Endothelial cell of umbilical vein (primary cell): ENCODE measurements at regions of chr13 and their contacts with region 1.

Region 1: GRCh38 chr13:99200432-99201167 is at the start of gene UBAC2:
- DNase-seq: peak; percentile 96
- H3K4me3 ChIP-seq: peak within 1 kb of the TSS; percentile 75 to 95 (median 79)
- H3K27ac ChIP-seq: peak within 1 kb of the TSS; percentile 85
- H3K4me1 ChIP-seq: peaks cover 7% of the 10 kb centered on the region
- H3K27me3 ChIP-seq: no peaks in the 10 kb centered on the region
- CTCF ChIP-seq: no peak
- POLR2A ChIP-seq: peak; percentile 97
- total RNA-seq, gene UBAC2: 45.2 and 45.7 TPM in 2 replicates

Region 2: GRCh38 chr13:99087096-99087953 is 113.3 kb before region 1 on chr13:
- CTCF ChIA-PET with region 1: no interaction called
- POLR2A ChIA-PET with region 1: no interaction called
- dilution Hi-C with region 1: no loop called
- intact Hi-C with region 1: loop called (anchors 2 kb)
- DNase-seq: peak; percentile 88
- H3K4me3 ChIP-seq: peak overlapping the region; percentile 61 to 65 (median 63)
- H3K27ac ChIP-seq: peak overlapping the region; percentile 20
- H3K4me1 ChIP-seq: peaks cover 19% of the 10 kb centered on the region
- H3K27me3 ChIP-seq: no peaks in the 10 kb centered on the region
- CTCF ChIP-seq: peak in 1 of 2 donors; percentile 45
- POLR2A ChIP-seq: no peak

Region 3: GRCh38 chr13:99214232-99214631 is 13.6 kb after region 1 on chr13:
- CTCF ChIA-PET with region 1: interaction called, 12 read pairs
- POLR2A ChIA-PET with region 1: no interaction called
- dilution Hi-C with region 1: no loop called
- intact Hi-C with region 1: no loop called
- DNase-seq: no peak
- H3K4me3 ChIP-seq: no peak overlapping the region
- H3K27ac ChIP-seq: no peak overlapping the region
- H3K4me1 ChIP-seq: peaks cover 4% of the 10 kb centered on the region
- H3K27me3 ChIP-seq: no peaks in the 10 kb centered on the region
- CTCF ChIP-seq: no peak
- POLR2A ChIP-seq: no peak

Region 4: DNA sequence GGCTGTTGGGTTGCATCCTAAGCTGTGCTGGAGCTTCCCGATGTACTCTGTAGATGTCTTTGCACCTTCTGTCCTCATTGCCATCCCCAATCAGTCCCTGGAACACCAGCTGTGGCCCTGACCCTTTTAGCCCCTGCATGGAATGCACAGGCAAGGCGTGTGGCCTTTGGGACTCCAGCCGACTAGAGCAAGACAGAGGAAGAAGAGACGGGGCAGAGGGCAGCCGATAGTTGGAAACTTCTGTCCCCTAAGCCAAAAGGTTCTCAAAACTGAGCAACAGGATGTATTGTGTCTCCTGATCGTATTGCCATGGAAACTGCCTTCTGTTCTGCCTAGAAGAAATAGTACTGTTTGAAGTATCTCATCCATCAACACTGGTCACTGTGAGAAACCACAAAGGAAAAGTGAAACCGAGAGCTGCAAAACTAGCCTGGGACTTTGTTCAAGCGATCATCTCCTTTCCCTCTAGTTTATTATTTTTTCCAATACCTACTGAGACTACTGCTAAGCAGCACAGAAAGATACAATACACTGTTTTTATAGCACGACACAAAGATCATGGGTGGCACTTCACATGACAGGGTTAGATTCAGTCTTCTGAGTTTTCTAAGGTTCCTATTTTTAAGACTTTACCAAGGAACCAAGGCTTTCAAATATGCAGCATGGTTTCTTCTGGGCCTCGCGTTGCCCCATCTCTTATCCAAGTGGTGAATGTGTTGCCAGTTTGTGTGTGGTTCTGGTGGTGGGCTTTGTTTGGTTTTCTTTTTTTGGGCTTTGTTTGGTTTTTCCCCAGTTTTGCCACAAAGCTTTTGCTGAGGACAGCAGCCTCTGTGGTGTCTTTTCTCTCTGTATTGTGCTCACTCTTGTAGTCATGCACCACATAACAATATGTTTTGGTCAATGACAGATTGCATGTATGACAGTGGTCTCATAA is 155.8 kb after region 1 on chr13:
- CTCF ChIA-PET with region 1: no interaction called
- POLR2A ChIA-PET with region 1: no interaction called
- dilution Hi-C with region 1: no loop called
- intact Hi-C with region 1: loop called (anchors 1 kb)
- DNase-seq: peak; percentile 94
- H3K4me3 ChIP-seq: peak overlapping the region in 1 of 3 experiments; percentile 15
- H3K27ac ChIP-seq: peak overlapping the region; percentile 97
- H3K4me1 ChIP-seq: peaks cover 24% of the 10 kb centered on the region
- H3K27me3 ChIP-seq: no peaks in the 10 kb centered on the region
- CTCF ChIP-seq: no peak
- POLR2A ChIP-seq: no peak

Region 5: DNA sequence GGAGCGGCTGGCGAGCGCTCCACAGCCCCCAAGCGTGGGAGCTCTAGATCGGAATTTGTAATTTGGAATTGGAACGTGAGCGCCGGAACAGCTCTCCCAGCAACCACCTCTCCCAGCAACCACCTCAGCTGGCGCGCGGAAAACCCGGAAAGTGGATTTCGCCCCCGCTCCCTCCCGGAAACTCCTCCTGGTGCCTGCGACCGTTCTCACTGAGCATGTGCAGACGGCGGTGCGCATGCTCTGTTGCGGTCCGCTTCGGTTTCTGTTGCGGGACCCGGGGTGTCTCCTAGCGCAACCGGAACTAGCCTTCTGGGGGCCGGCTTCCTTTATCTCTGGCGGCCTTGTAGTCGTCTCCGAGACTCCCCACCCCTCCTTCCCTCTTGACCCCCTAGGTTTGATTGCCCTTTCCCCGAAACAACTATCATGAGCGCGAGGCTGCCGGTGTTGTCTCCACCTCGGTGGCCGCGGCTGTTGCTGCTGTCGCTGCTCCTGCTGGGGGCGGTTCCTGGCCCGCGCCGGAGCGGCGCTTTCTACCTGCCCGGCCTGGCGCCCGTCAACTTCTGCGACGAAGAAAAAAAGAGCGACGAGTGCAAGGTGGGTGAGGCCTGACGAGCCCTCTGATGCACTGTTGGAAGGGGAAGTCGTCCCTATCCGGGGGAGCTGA is 300.7 kb after region 1 on chr13 and contains the start of gene TM9SF2:
- CTCF ChIA-PET with region 1: no interaction called
- POLR2A ChIA-PET with region 1: no interaction called
- dilution Hi-C with region 1: no loop called
- intact Hi-C with region 1: loop called (anchors 5 kb)
- DNase-seq: peak; percentile 95
- H3K4me3 ChIP-seq: peak within 1 kb of the TSS; percentile 91 to 96 (median 91)
- H3K27ac ChIP-seq: peak within 1 kb of the TSS; percentile 68
- H3K4me1 ChIP-seq: peaks cover 34% of the 10 kb centered on the region
- H3K27me3 ChIP-seq: no peaks in the 10 kb centered on the region
- CTCF ChIP-seq: no peak
- POLR2A ChIP-seq: peak; percentile 74
- total RNA-seq, gene TM9SF2: 85.9 and 90.0 TPM in 2 replicates